ENCODE measurements at regions of chr3 and their contacts with region 1.

Region 1: DNA sequence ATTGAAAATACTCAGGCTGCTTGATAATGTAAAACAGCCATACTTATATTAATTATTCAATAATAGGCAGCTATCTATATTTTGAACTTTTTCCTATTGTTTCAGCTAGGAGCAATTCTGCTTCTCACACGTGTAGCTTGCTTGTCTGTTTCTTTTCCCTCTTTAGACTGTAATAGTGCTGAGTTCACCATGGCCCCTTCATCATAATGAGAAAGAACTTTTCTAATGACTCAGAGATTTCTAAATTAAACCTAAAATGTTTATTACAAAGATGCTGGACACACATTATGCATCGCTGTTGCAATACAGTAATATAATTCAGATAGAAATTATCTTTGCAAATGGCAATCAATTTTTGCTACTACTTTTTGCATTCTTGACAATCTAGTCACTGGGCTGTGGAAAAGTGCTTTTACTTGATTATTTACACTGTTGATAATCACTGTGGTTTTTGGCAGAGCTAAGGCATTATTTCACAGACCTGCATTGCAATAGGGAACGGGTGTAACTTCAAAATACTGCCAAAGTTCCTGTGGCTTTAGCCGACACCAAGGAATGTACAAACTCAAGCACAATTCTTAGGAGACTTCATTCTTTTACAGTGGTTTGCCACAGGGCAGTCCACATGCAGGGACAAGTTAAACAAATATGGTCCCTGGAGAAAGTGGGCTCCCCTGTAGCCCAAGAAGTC is 281.0 kb upstream of the TBL1XR1 start:
- DNase-seq: peak; percentile 98
- H3K4me3 Mint-ChIP-seq: peak overlapping the region; percentile 19
- H3K27ac Mint-ChIP-seq: peak overlapping the region; percentile 92
- H3K4me1 Mint-ChIP-seq: peaks cover 23% of the 10 kb centered on the region
- H3K27me3 Mint-ChIP-seq: no peaks in the 10 kb centered on the region
- CTCF ChIP-seq: no peak

Region 2: DNA sequence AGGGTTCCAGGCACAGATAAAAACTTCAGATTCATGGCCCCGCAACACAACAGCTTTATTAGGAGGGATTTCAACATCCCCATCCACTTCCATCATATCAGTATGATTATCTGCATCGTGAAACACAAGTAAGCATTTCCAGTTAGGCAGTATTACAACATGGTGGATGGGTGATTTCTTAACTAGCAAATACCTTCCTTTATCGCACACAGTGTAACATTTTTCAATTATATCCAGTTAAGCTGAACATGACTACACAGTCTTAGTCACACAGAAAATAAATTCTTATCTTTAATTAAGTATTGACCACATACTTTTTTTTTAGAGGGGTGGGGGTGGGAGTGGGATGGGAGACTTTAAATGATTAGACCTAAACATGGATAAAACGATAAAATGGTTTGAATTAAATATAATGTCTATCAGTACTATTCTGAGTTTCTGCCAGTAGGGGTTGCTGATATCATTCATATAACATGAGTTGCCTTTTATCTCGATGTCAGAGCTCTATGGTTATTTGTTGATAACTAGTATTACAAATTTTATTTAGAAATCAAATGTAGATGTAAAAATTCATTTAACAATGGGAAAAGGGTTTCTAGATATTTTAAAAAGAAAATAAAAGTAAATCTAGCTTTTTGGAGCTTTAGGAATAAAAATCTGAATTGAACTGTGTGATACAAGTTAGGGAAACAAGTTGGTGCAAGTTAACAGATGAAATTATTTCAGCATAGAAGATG is 427.6 kb before region 1 on chr3:
- CTCF ChIA-PET with region 1: no interaction called
- POLR2A ChIA-PET with region 1: no interaction called
- intact Hi-C with region 1: loop called (anchors 1 kb)
- DNase-seq: peak; percentile 53
- H3K4me3 Mint-ChIP-seq: no peak overlapping the region
- H3K27ac Mint-ChIP-seq: no peak overlapping the region
- H3K4me1 Mint-ChIP-seq: peaks cover 5% of the 10 kb centered on the region
- H3K27me3 Mint-ChIP-seq: no peaks in the 10 kb centered on the region
- CTCF ChIP-seq: peak; percentile 52

Region 3: GRCh38 chr3:177345049-177345972 is 133.0 kb before region 1 on chr3:
- CTCF ChIA-PET with region 1: no interaction called
- POLR2A ChIA-PET with region 1: no interaction called
- intact Hi-C with region 1: no loop called
- DNase-seq: peak; percentile 94
- H3K4me3 Mint-ChIP-seq: no peak overlapping the region
- H3K27ac Mint-ChIP-seq: peak overlapping the region; percentile 78
- H3K4me1 Mint-ChIP-seq: peaks cover 39% of the 10 kb centered on the region
- H3K27me3 Mint-ChIP-seq: no peaks in the 10 kb centered on the region
- CTCF ChIP-seq: no peak

Region 4: GRCh38 chr3:177371888-177372287 is 106.4 kb before region 1 on chr3:
- CTCF ChIA-PET with region 1: no interaction called
- POLR2A ChIA-PET with region 1: no interaction called
- intact Hi-C with region 1: no loop called
- DNase-seq: no peak
- H3K4me3 Mint-ChIP-seq: no peak overlapping the region
- H3K27ac Mint-ChIP-seq: no peak overlapping the region
- H3K4me1 Mint-ChIP-seq: peaks cover 3% of the 10 kb centered on the region
- H3K27me3 Mint-ChIP-seq: no peaks in the 10 kb centered on the region
- CTCF ChIP-seq: no peak

Region 5: DNA sequence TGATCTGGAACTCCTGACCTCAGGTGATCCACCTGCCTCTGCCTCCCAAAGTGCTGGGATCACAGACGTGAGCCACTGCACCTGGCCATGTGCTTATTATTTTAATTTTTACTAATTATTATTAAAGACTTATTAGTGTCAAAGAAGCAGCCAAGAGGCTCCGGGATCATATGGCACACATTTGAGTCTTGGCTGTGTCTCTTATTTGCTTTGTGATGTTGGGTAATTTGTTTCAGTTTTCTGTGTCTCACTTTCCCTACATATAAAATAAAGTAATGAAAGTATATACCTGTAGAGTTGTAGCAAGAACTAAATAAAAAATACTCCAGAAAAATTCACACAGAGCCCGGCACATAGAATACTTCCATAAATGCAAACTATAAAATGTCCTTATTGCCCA is 43.0 kb before region 1 on chr3:
- CTCF ChIA-PET with region 1: no interaction called
- POLR2A ChIA-PET with region 1: no interaction called
- intact Hi-C with region 1: no loop called
- DNase-seq: no peak
- H3K4me3 Mint-ChIP-seq: no peak overlapping the region
- H3K27ac Mint-ChIP-seq: no peak overlapping the region
- H3K4me1 Mint-ChIP-seq: peaks cover 11% of the 10 kb centered on the region
- H3K27me3 Mint-ChIP-seq: no peaks in the 10 kb centered on the region
- CTCF ChIP-seq: no peak

Region 6: DNA sequence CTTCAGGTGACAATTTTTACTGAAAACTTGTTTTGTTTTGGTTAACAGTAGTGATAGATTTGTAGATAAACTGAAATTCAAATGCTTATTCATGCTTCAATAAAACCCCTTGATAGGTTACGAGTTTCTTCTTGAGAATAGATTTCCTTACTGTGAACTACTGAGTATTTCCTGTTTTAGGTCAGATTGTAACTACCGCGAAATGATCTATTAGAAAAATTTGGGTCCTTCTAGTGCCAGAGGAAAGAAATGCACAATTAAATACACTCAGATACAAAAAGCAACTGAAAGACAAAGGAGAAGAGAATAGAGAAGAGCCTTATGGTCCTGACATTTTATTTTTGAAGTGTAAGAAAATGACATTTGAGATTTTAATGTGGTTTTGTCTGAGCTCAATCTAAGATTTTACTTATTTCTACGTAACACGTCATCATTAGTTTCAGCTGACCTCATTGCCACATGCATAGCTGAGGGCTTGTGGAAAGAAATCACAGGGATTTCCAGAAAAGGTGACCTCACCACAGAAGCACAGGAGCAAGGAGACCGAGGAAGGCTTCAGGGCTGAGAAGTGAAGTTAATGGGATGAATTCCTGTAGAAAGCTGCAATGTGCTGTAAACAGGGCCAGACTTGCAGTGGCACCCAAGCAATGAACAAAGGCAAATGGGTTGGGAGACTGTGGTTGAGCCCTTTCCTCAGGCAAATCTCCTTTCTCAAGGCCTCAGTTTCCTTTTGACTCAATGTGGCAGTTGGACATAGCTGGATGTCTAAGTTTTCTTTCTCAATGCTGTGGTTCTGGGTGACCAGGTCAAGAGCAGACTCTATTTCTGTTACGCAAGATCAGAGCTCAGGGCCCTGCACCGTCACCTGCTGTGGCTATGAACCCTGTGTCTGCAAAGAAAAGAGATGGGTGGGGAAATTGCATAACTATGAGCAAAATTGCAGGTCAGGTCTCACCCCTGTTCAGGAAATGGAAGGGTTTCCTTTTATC is 29.0 kb before region 1 on chr3:
- CTCF ChIA-PET with region 1: interaction called, 5 read pairs
- POLR2A ChIA-PET with region 1: interaction called, 32 read pairs
- intact Hi-C with region 1: loop called (anchors 1 kb)
- DNase-seq: peak; percentile 95
- H3K4me3 Mint-ChIP-seq: peak overlapping the region; percentile 43
- H3K27ac Mint-ChIP-seq: peak overlapping the region; percentile 63
- H3K4me1 Mint-ChIP-seq: peaks cover 21% of the 10 kb centered on the region
- H3K27me3 Mint-ChIP-seq: no peaks in the 10 kb centered on the region
- CTCF ChIP-seq: no peak

Region 7: DNA sequence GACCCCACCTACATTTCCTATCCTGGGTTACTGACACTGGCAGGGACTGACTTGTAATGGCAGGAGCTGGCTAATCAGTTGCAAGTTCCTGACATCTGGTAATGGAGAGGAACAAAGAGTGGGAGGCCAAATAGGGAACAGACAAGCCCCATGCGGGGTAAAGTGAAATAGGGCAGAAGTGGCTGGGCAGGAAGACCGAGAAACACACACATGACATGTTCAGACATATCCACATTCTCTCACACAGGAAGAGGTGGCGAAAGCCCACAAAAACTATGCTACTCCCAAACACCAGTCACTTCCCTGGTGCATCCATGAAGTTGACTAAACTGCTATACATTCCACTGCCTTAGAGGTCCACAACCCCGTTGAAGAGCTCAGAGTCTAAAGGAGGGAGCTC is 113.1 kb after region 1 on chr3:
- CTCF ChIA-PET with region 1: interaction called, 3 read pairs
- POLR2A ChIA-PET with region 1: interaction called, 14 read pairs
- intact Hi-C with region 1: loop called (anchors 10 kb)
- DNase-seq: peak; percentile 94
- H3K4me3 Mint-ChIP-seq: no peak overlapping the region
- H3K27ac Mint-ChIP-seq: peak overlapping the region; percentile 92
- H3K4me1 Mint-ChIP-seq: peaks cover 62% of the 10 kb centered on the region
- H3K27me3 Mint-ChIP-seq: no peaks in the 10 kb centered on the region
- CTCF ChIP-seq: no peak

Region 8: DNA sequence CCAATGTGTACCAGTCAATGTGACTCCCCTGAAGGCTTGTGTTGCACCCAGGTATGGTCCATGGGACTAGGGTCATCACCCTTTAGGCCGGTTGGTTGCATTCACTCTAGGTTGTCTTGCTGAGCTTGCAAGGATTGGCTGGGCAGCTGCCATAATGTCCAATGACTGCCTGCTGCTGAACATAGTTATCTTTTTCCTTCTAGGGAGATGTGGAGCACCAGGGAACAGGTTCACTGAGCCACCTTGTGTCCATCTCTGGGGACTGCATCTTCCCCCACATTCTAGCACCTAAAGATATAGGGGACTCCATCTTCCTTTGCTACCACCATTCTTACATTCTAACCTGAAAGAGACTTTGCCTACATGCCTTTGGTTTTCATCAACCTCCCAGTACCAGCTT is 299.4 kb after region 1 on chr3:
- CTCF ChIA-PET with region 1: interaction called, 5 read pairs
- POLR2A ChIA-PET with region 1: no interaction called
- intact Hi-C with region 1: loop called (anchors 1 kb)
- DNase-seq: peak; percentile 74
- H3K4me3 Mint-ChIP-seq: no peak overlapping the region
- H3K27ac Mint-ChIP-seq: no peak overlapping the region
- H3K4me1 Mint-ChIP-seq: peaks cover 15% of the 10 kb centered on the region
- H3K27me3 Mint-ChIP-seq: no peaks in the 10 kb centered on the region
- CTCF ChIP-seq: peak; percentile 49

Measured in MCF 10A (cell line).